ENCODE measurements at regions of chr16 and their contacts with region 1.

Region 1: GRCh38 chr16:68528686-68529379 is 10.3 kb upstream of the ZFP90 start:
- DNase-seq: peak; percentile 66 to 77
- ATAC-seq: peak; percentile 86 to 91
- H3K4me3 ChIP-seq: peak overlapping the region; percentile 23 to 28 (median 24)
- H3K27ac ChIP-seq: no peak overlapping the region
- H3K4me1 ChIP-seq: peaks cover 9 to 13% of the 10 kb centered on the region in 2 donors
- H3K27me3 ChIP-seq: no peaks in the 10 kb centered on the region
- CTCF ChIP-seq: peak; percentile 82 to 94 (median 91)
- POLR2A ChIP-seq: no peak

Region 2: GRCh38 chr16:68538880-68539701 is 10.3 kb after region 1 on chr16 and contains the start of gene ZFP90:
- in situ Hi-C with region 1: no loop called
- intact Hi-C with region 1: no loop called
- DNase-seq: peak; percentile 65 to 76
- ATAC-seq: peak; percentile 90 to 93
- H3K4me3 ChIP-seq: peak within 1 kb of the TSS; percentile 85 to 100 (median 95)
- H3K27ac ChIP-seq: peak within 1 kb of the TSS; percentile 73 to 83 (median 74)
- H3K4me1 ChIP-seq: peaks cover 0 to 8% of the 10 kb centered on the region in 2 donors
- H3K27me3 ChIP-seq: no peaks in the 10 kb centered on the region
- CTCF ChIP-seq: no peak
- POLR2A ChIP-seq: peak; percentile 29 to 43
- total RNA-seq, gene ZFP90: 8.2 to 36.6 (median 9.9) TPM

Region 3: GRCh38 chr16:68575082-68575481 is 46.2 kb after region 1 on chr16:
- in situ Hi-C with region 1: no loop called
- intact Hi-C with region 1: no loop called
- DNase-seq: no peak
- ATAC-seq: no peak
- H3K4me3 ChIP-seq: peak overlapping the region in 1 of 4 donors; percentile 21
- H3K27ac ChIP-seq: no peak overlapping the region
- H3K4me1 ChIP-seq: no peaks in the 10 kb centered on the region
- H3K27me3 ChIP-seq: no peaks in the 10 kb centered on the region
- CTCF ChIP-seq: no peak
- POLR2A ChIP-seq: no peak

Region 4: GRCh38 chr16:68696514-68696913 is 167.7 kb after region 1 on chr16:
- in situ Hi-C with region 1: no loop called
- intact Hi-C with region 1: no loop called
- DNase-seq: no peak
- ATAC-seq: no peak
- H3K4me3 ChIP-seq: no peak overlapping the region
- H3K27ac ChIP-seq: no peak overlapping the region
- H3K4me1 ChIP-seq: no peaks in the 10 kb centered on the region
- H3K27me3 ChIP-seq: no peaks in the 10 kb centered on the region
- CTCF ChIP-seq: no peak
- POLR2A ChIP-seq: no peak

Region 5: DNA sequence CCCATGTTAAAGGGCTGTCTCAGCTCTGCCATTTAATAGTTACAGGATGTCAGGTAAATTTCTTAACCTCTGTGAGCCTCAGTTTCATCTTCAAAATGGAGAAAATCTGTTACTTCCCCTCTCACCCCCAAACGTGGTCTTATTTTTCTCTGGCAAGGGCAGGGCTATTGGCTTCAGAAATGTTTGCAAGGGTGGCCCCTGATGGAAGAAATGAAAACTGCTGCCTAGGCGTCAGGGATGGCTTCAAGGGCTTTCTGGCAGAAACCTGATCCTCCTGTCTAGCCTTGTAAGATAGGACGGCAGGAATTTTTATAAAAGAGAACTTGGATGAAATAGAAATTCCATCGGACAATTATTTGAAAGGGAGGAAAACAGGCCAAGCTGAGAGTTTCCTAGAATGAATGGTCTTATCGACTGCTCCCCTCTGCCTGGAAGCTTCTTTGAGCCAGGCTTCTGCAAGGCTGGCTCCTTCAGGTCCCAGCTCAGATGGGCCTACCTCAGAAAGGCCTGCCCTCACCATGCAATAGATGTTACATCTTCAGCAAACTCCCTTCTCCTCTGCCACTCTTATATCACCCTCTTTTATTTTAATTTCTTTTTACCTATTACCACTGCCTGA is 271.5 kb after region 1 on chr16:
- in situ Hi-C with region 1: loop called in 1 of 4 experiments (anchors 10 kb)
- intact Hi-C with region 1: no loop called
- DNase-seq: no peak
- ATAC-seq: no peak
- H3K4me3 ChIP-seq: no peak overlapping the region
- H3K27ac ChIP-seq: no peak overlapping the region
- H3K4me1 ChIP-seq: no peaks in the 10 kb centered on the region
- H3K27me3 ChIP-seq: no peaks in the 10 kb centered on the region
- CTCF ChIP-seq: peak in 1 of 5 experiments; percentile 18
- POLR2A ChIP-seq: no peak

Region 6: DNA sequence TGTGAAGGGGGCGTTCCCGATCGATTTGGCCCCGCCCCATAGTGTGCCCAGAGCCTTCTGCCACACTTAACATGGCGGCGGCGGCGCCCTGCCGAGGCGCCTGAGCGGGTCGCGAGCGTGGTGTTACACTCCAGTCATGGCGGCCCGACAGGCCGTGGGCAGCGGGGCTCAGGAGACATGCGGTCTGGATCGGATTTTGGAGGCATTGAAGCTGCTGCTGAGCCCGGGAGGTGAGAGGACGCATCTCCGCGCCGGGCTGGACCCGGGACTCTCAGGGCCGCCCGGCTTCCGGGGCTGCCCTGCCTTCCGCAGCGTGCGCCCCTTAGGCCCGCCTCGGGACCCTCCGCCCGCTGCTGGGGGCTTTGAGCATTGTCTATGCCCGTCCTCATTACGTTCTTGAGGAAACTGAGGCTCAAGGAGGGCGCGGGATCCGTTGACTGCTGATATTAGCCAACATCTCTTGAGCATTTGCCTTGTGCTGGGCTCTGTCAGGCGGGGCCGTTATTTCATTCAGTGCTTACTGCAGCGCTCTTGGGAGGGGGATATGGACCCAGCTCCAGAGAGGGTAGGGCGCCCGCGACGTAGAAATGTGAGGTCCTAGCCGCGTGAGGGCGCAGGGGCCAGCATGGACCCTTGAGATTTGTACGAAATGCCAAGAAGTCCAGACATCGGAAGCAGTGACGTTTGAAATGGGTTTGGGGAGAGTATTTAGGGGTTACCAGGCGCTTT is 314.8 kb after region 1 on chr16 and contains the start of gene TANGO6:
- in situ Hi-C with region 1: loop called in 2 of 4 experiments (anchors 10 to 25 kb)
- intact Hi-C with region 1: loop called (anchors 2 kb)
- DNase-seq: peak; percentile 65 to 82
- ATAC-seq: peak; percentile 96 to 97
- H3K4me3 ChIP-seq: peak within 1 kb of the TSS; percentile 76 to 99 (median 90)
- H3K27ac ChIP-seq: peak within 1 kb of the TSS; percentile 86 to 95 (median 90)
- H3K4me1 ChIP-seq: peaks cover 5 to 9% of the 10 kb centered on the region in 2 donors
- H3K27me3 ChIP-seq: no peaks in the 10 kb centered on the region
- CTCF ChIP-seq: no peak
- POLR2A ChIP-seq: peak; percentile 13 to 38
- total RNA-seq, gene TANGO6: 13.6 to 20.0 (median 17.8) TPM

Region 7: DNA sequence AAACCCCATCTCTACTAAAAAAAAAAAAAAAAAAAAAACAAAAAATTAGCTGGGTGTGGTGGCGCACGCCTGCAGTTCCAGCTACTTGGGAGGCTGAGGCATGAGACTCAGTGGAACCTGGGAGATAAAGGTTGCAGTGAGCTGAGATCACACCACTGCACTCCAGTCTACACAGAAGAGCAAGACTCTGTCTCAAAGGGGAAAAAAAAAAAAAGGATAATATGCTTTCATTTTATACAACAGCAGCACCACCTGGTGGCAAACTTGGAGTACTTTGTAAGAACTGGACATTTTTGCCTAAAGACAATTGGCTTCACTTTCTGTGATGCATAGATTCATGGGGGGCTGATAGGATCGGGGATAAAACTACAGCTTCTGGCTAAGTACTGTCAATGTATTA is 595.1 kb after region 1 on chr16:
- in situ Hi-C with region 1: loop called in 3 of 4 experiments (anchors 10 to 25 kb)
- intact Hi-C with region 1: no loop called
- DNase-seq: no peak
- ATAC-seq: peak in 1 of 2 donors; percentile 62
- H3K4me3 ChIP-seq: no peak overlapping the region
- H3K27ac ChIP-seq: no peak overlapping the region
- H3K4me1 ChIP-seq: peaks cover 6 to 7% of the 10 kb centered on the region in 2 donors
- H3K27me3 ChIP-seq: no peaks in the 10 kb centered on the region
- CTCF ChIP-seq: peak; percentile 41 to 69 (median 65)
- POLR2A ChIP-seq: no peak

Region 8: DNA sequence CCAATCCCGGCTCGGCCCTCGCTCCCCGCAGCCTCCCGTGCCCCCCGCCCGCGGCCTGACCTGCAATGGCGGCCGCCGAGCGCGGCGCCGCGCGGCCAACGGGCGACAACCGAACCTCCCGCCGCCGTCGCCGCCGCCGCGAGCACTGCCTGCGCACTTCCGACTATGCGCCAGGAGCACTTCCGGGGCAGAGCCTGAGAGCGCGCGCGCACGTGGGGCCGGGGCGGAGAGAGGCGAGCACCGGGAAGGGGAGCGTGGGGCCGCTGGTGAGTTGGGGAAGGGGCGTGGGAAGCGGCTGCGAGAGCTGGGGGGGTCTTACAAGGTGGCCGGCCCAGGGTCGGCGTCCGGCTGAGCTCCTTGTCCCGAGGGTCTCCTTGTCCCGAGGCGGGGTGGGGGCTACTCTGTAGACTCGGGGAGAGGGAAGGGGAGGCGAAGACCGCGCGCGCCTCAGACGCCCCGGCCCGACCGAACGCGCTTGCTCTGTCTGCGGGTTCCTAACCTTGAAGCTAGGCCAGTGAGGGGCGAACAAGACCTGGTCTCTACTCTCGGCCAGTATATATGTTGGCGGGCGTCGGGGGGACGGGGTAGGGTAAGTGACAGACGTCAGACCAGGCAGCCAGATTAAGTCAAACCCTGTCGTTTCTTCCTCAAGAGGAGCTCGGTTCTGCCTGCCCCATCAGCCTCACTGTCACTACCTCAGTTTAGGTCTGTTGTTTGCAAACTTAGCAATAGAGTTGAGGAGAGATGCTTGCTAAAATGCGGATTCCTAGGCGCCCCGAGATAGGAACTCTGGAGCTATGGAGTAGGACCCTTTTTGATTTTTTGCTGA is 603.8 kb after region 1 on chr16 and contains the starts of genes CHTF8 and UTP4:
- in situ Hi-C with region 1: loop called in 1 of 4 experiments (anchors 10 kb)
- intact Hi-C with region 1: loop called (anchors 5 kb)
- DNase-seq: peak; percentile 72 to 82
- ATAC-seq: peak; percentile 95 to 97
- H3K4me3 ChIP-seq: peak within 1 kb of the TSS; percentile 79 to 97 (median 86)
- H3K27ac ChIP-seq: peak within 1 kb of the TSS; percentile 86 to 94 (median 92)
- H3K4me1 ChIP-seq: peaks cover 26 to 29% of the 10 kb centered on the region in 2 donors
- H3K27me3 ChIP-seq: no peaks in the 10 kb centered on the region
- CTCF ChIP-seq: no peak
- POLR2A ChIP-seq: peak; percentile 97 to 98
- total RNA-seq, gene CHTF8: 27.3 to 52.3 (median 34.8) TPM
- total RNA-seq, gene UTP4: 33.1 to 44.2 (median 35.5) TPM

Region 9: DNA sequence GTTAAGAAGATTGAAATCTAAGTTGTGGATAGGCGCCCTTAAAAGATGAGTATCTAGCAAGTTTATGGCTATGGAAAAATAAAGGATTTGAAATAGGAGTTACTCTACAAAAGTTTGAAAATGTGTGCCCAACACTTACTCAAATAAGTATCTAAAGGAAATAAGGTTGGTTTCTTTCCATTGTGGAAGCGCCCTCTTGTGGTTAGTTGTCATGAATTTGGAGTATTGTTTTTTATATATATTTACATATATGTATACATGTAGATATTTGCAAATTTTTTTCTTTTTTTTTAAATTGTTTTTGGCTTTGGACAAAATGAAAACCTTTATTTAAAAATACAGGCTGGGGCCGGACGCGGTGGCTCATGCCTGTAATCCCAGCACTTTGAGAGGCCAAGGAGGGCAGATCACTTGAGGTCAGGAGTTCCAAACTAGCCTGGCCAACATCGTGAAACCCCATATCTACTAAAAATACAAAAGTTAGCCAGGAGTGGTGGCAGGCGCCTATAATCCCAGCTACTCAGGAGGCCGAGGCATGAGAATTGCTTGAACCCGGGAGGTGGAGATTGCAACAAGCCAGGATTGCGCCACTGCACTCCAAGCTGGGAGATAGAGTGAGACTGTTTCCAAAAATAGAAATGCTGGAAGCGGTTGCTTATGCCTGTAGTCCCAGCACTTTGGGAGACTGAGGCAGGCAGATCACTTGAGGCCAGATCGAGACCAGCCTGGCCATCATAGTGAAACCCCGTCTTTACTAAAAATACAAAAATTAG is 758.3 kb after region 1 on chr16:
- in situ Hi-C with region 1: loop called in 1 of 4 experiments (anchors 25 kb)
- intact Hi-C with region 1: no loop called
- DNase-seq: peak; percentile 76 to 93
- ATAC-seq: peak; percentile 97 to 98
- H3K4me3 ChIP-seq: no peak overlapping the region
- H3K27ac ChIP-seq: peak overlapping the region; percentile 48 to 80 (median 70)
- H3K4me1 ChIP-seq: peaks cover 7 to 9% of the 10 kb centered on the region in 2 donors
- H3K27me3 ChIP-seq: no peaks in the 10 kb centered on the region
- CTCF ChIP-seq: peak; percentile 46 to 77 (median 69)
- POLR2A ChIP-seq: no peak